Spleen (tissue), 13 donors: ENCODE measurements at regions of chr1 and their contacts with region 1.

Region 1: DNA sequence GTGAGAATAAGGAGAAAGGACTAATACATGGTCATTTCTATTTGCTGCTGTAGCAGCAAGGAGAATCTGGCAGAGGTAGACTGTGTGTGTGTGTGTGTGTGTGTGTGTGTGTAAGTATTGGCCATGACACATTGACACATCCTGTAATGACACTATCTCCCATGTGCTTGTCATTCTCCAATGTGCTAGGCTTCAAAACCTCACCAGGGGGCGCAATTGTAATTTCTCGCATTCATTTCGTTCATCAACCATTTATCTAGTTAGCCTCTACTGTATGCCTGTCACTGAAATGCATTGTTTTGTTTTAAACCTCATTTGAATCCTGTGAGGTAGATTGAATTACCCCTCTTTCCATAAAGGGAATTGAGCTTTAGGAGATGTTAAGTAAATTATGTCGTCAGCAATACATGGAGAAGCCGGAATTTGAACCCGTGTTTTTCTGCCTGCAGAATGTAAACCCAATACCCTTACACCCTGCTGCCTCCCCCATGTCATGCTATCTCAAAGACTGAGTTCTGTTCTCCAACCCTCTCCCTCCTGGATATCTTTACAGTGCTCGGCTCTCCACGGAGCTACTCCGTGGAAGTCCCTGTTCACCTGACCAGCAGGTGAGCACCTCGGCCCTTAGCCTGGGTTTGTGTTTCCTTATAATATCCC is 100.8 kb downstream of the UCK2 start:
- DNase-seq: no peak
- H3K4me3 ChIP-seq: no peak overlapping the region
- H3K27ac ChIP-seq: no peak overlapping the region
- H3K4me1 ChIP-seq: no peaks in the 10 kb centered on the region
- H3K27me3 ChIP-seq: peaks cover 0 to 33% (median 0%) of the 10 kb centered on the region in 7 donors
- CTCF ChIP-seq: peak; percentile 18 to 69 (median 64)
- POLR2A ChIP-seq: no peak

Region 2: GRCh38 chr1:166166695-166167571 is 238.7 kb after region 1 on chr1 and contains the start of gene FAM78B:
- intact Hi-C with region 1: loop called (anchors 10 kb)
- DNase-seq: peak; percentile 86
- H3K4me3 ChIP-seq: peak within 1 kb of the TSS; percentile 41 to 84 (median 62)
- H3K27ac ChIP-seq: peak within 1 kb of the TSS in 6 of 8 donors; percentile 35 to 66 (median 58)
- H3K4me1 ChIP-seq: peaks cover 6 to 31% (median 19%) of the 10 kb centered on the region in 6 donors
- H3K27me3 ChIP-seq: peaks cover 0 to 57% (median 14%) of the 10 kb centered on the region in 7 donors
- CTCF ChIP-seq: peak in 4 of 11 experiments; percentile 4 to 32 (median 10)
- POLR2A ChIP-seq: no peak
- total RNA-seq, gene FAM78B: 0.64 to 3.0 (median 1.6) TPM

Region 3: GRCh38 chr1:166479052-166479631 is 550.9 kb after region 1 on chr1:
- intact Hi-C with region 1: loop called (anchors 5 kb)
- DNase-seq: no peak
- H3K4me3 ChIP-seq: no peak overlapping the region
- H3K27ac ChIP-seq: no peak overlapping the region
- H3K4me1 ChIP-seq: no peaks in the 10 kb centered on the region
- H3K27me3 ChIP-seq: no peaks in the 10 kb centered on the region
- CTCF ChIP-seq: peak in 10 of 11 experiments; percentile 37 to 78 (median 68)
- POLR2A ChIP-seq: no peak

Region 4: GRCh38 chr1:166489670-166490436 is 561.6 kb after region 1 on chr1:
- intact Hi-C with region 1: loop called (anchors 5 kb)
- DNase-seq: peak; percentile 82
- H3K4me3 ChIP-seq: peak overlapping the region; percentile 36 to 74 (median 43)
- H3K27ac ChIP-seq: peak overlapping the region; percentile 73 to 89 (median 82)
- H3K4me1 ChIP-seq: peaks cover 3 to 29% (median 12%) of the 10 kb centered on the region in 6 donors
- H3K27me3 ChIP-seq: no peaks in the 10 kb centered on the region
- CTCF ChIP-seq: no peak
- POLR2A ChIP-seq: no peak